Activated CD4-positive, alpha-beta T cell treated with anti-CD3 and anti-CD28 coated beads for 36 hours (primary cell): ENCODE measurements at regions of chr1 and their contacts with region 1.

Region 1: GRCh38 chr1:32801096-32801715 is 16.0 kb downstream of the YARS1 start:
- DNase-seq: peak; percentile 59
- ATAC-seq: peak; percentile 63
- H3K4me3 Mint-ChIP-seq: peak overlapping the region; percentile 49
- H3K27ac Mint-ChIP-seq: peak overlapping the region; percentile 69
- H3K4me1 Mint-ChIP-seq: peaks cover 56% of the 10 kb centered on the region
- H3K27me3 Mint-ChIP-seq: no peaks in the 10 kb centered on the region

Region 2: DNA sequence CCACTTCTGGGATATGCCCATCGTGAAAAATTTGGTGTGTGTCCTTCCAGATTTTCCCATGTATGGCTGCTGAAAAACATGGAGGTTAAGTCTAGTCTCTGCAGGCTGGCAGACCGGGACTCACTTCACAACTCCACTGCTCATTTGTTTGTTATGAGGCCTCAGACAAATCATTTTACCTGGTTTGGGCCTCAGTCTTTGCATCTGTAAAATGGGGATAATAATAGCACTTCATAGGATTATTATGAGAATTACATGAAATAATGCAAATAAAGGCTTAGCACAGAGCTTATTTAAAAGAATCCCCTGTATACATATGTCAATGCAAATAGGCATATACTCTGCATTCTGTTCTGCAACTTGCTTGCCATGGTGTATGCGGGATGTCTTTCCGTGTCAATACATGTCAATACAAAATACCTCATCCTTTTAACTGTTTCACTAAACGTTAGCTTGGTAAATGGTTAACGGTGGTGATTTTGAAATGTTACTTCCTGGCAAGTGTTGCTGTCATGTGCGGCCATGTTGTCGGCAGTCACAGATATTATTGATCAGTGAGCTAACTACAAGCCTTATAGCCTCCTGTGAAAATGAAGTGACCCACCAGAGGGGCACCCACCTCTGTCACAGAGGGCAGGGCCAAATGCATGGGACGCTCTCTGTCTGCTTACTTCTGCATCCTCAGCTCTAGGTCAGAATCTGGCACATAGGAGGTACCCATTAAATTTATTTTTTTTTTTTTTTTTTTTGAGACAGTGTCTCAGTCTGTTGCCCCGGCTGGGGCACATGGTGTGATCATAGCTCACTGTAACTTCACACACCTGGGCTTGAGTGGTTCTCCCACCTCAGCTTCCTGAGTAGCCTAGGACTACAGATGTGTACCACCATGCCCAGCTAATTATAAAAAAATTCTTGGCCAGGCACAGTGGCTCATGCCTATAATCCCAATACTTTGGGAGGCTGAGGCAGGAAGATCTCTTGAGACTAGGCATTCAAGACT is 545.8 kb before region 1 on chr1:
- CTCF ChIA-PET with region 1: no interaction called
- POLR2A ChIA-PET with region 1: no interaction called
- intact Hi-C with region 1: loop called in 1 of 2 experiments (anchors 5 kb)
- DNase-seq: peak; percentile 55
- ATAC-seq: peak; percentile 6
- H3K4me3 Mint-ChIP-seq: peak overlapping the region; percentile 91
- H3K27ac Mint-ChIP-seq: peak overlapping the region; percentile 87
- H3K4me1 Mint-ChIP-seq: peaks cover 48% of the 10 kb centered on the region
- H3K27me3 Mint-ChIP-seq: no peaks in the 10 kb centered on the region

Region 3: GRCh38 chr1:32619701-32620485 is 181.3 kb before region 1 on chr1:
- CTCF ChIA-PET with region 1: interaction called, 4 read pairs
- POLR2A ChIA-PET with region 1: no interaction called
- intact Hi-C with region 1: loop called in 1 of 2 experiments (anchors 1 kb)
- DNase-seq: peak; percentile 23
- ATAC-seq: no peak
- H3K4me3 Mint-ChIP-seq: no peak overlapping the region
- H3K27ac Mint-ChIP-seq: no peak overlapping the region
- H3K4me1 Mint-ChIP-seq: peaks cover 34% of the 10 kb centered on the region
- H3K27me3 Mint-ChIP-seq: no peaks in the 10 kb centered on the region

Region 4: GRCh38 chr1:32753532-32754312 is 47.5 kb before region 1 on chr1:
- CTCF ChIA-PET with region 1: no interaction called
- POLR2A ChIA-PET with region 1: no interaction called
- intact Hi-C with region 1: loop called in 1 of 2 experiments (anchors 1 kb)
- DNase-seq: peak; percentile 80
- ATAC-seq: peak; percentile 87
- H3K4me3 Mint-ChIP-seq: peak overlapping the region; percentile 53
- H3K27ac Mint-ChIP-seq: no peak overlapping the region
- H3K4me1 Mint-ChIP-seq: peaks cover 10% of the 10 kb centered on the region
- H3K27me3 Mint-ChIP-seq: peaks cover 8% of the 10 kb centered on the region

Region 5: GRCh38 chr1:32761253-32761880 is 39.8 kb before region 1 on chr1:
- CTCF ChIA-PET with region 1: no interaction called
- POLR2A ChIA-PET with region 1: interaction called, 3 read pairs
- intact Hi-C with region 1: loop called in 1 of 2 experiments (anchors 1 kb)
- DNase-seq: peak; percentile 81
- ATAC-seq: peak; percentile 80
- H3K4me3 Mint-ChIP-seq: no peak overlapping the region
- H3K27ac Mint-ChIP-seq: peak overlapping the region; percentile 45
- H3K4me1 Mint-ChIP-seq: peaks cover 26% of the 10 kb centered on the region
- H3K27me3 Mint-ChIP-seq: no peaks in the 10 kb centered on the region